Dendritic cell treated with granulocyte-macrophage colony-stimulating factor and Interleukin-4, amounts not matched to agents 40 ng/mL and 50 ng/mL, for 4 days (primary cell): ENCODE measurements at regions of chr10 and their contacts with region 1.

Region 1: GRCh38 chr10:42638055-42638820 is at the start of gene ZNF33B:
- H3K4me3 Mint-ChIP-seq: peak within 1 kb of the TSS; percentile 90
- H3K27ac Mint-ChIP-seq: peak within 1 kb of the TSS; percentile 95
- H3K4me1 Mint-ChIP-seq: peaks cover 14% of the 10 kb centered on the region
- H3K27me3 Mint-ChIP-seq: no peaks in the 10 kb centered on the region

Region 2: GRCh38 chr10:42380926-42381547 is 257.2 kb before region 1 on chr10:
- intact Hi-C with region 1: no loop called
- H3K4me3 Mint-ChIP-seq: no peak overlapping the region
- H3K27ac Mint-ChIP-seq: no peak overlapping the region
- H3K4me1 Mint-ChIP-seq: no peaks in the 10 kb centered on the region
- H3K27me3 Mint-ChIP-seq: no peaks in the 10 kb centered on the region

Region 3: GRCh38 chr10:42488416-42488815 is 149.8 kb before region 1 on chr10:
- intact Hi-C with region 1: no loop called
- H3K4me3 Mint-ChIP-seq: no peak overlapping the region
- H3K27ac Mint-ChIP-seq: no peak overlapping the region
- H3K4me1 Mint-ChIP-seq: no peaks in the 10 kb centered on the region
- H3K27me3 Mint-ChIP-seq: no peaks in the 10 kb centered on the region

Region 4: GRCh38 chr10:42782446-42783180 is 144.4 kb after region 1 on chr10 and contains the start of gene BMS1:
- intact Hi-C with region 1: loop called (anchors 10 kb)
- H3K4me3 Mint-ChIP-seq: peak within 1 kb of the TSS; percentile 79
- H3K27ac Mint-ChIP-seq: peak within 1 kb of the TSS; percentile 86
- H3K4me1 Mint-ChIP-seq: peaks cover 6% of the 10 kb centered on the region
- H3K27me3 Mint-ChIP-seq: peaks cover 19% of the 10 kb centered on the region

Region 5: DNA sequence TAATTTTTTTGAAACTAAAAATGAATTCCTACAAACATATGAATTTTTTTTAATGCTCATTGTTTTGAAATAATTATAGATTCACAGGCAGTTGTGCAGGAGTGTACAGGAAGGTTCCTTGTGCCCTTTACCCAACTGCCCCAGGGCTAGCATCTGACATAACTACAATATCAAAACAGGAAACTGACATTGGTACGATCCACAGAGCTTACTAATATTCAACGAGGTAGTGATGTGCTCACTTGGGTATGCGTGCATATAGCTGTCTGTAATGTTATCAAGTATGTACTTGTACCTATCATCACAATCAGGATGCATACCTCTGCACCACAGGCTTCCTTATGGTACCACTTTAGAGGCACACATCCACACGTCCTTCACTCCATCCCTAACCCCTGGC is 212.7 kb after region 1 on chr10:
- intact Hi-C with region 1: no loop called
- H3K4me3 Mint-ChIP-seq: no peak overlapping the region
- H3K27ac Mint-ChIP-seq: no peak overlapping the region
- H3K4me1 Mint-ChIP-seq: no peaks in the 10 kb centered on the region
- H3K27me3 Mint-ChIP-seq: peaks cover 20% of the 10 kb centered on the region